Right ventricle myocardium superior (tissue), 1 donor: ENCODE measurements at regions of chr5 and their contacts with region 1.

Region 1: DNA sequence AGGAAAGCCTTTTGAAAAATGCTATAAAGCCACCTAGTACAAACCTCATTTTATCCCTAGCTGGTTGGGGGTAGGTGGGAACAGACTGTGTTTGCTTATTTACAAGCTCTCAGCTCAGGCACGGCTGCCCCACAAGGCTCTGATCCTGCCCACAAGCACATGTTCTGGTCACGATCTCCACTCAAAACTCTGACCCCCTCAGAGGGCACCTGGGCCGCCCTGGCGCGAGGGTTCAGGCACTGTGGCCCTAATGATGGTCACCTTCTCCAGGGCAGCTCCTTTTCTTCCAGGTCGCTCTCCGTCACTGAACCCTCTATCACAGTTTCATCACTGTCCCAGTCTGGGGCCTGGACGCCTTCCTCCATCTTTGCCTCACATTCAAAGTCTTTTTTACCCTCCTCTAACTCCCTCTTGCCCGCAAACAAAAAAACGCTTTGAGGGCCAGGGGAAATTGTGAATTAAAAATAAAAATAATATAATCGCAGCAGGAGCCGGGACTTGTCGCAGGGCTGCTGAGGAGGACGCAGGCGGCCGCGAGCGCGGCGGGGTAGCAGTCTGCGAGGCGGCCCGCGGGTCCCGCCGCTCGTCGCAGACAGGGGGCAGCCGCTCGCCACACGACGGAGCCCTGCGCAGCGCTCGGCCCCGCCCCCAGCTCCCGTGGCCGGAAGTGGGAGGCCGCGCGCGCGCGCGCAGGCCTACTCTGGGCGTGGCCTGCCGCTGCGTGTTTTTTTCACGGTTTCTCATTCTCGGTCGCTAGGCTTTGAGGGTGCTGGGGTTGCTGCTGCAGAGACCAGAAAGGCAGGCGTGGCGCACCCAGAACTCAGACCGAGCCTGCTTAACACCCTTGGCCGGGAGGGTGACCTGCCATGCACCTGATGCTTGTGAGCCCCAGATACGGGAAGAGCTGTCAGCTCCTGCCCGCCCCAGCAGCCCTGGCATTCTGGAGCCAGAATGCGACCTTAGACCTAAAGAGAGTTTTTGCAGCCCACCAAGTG is at the start of gene ANKRD31:
- DNase-seq: peak; percentile 93
- ATAC-seq: peak; percentile 100
- total RNA-seq, gene ANKRD31: 0.08 TPM

Region 2: GRCh38 chr5:74865804-74866595 is 370.6 kb before region 1 on chr5 and contains the start of gene FAM169A:
- intact Hi-C with region 1: no loop called
- DNase-seq: peak; percentile 45
- ATAC-seq: peak; percentile 79
- total RNA-seq, gene FAM169A: 3.0 TPM

Region 3: DNA sequence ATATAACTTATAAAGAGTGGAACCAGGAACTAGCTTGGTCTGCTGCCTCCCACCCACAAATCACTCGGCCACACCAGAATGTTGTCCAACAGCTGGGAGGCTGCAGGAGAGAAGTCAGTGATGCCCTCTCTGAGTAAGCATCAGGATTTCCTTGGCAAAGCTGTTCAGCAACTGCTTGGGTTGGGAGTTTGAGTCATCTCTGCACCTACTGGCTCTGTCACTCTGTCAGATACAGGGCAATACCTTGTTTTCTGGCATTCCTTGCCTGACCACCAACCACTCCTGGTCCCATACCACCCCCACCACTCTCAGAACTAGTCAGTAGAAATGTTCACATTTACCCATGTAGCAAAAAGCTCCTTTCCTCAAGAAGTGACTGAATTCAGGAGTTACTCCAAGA is 147.5 kb before region 1 on chr5:
- intact Hi-C with region 1: no loop called
- DNase-seq: no peak
- ATAC-seq: no peak

Region 4: GRCh38 chr5:75681125-75681830 is 444.7 kb after region 1 on chr5:
- intact Hi-C with region 1: loop called (anchors 10 kb)
- DNase-seq: no peak
- ATAC-seq: no peak